ENCODE measurements at regions of chr9 and their contacts with region 1.

Region 1: GRCh38 chr9:19464764-19465585 is 56.2 kb downstream of the ACER2 start:
- DNase-seq: peak; percentile 94
- H3K4me3 ChIP-seq: peak overlapping the region; percentile 46 to 70
- H3K27ac ChIP-seq: no peak overlapping the region
- H3K4me1 ChIP-seq: peaks cover 0 to 5% of the 10 kb centered on the region in 2 experiments; a peak in 1 of 4 replicates
- H3K27me3 ChIP-seq: no peaks in the 10 kb centered on the region
- CTCF ChIP-seq: peak; percentile 89
- EP300 ChIP-seq: no peak
- RAD21 ChIP-seq: peak; percentile 29; the same call in 1 of the 2 replicates

Region 2: DNA sequence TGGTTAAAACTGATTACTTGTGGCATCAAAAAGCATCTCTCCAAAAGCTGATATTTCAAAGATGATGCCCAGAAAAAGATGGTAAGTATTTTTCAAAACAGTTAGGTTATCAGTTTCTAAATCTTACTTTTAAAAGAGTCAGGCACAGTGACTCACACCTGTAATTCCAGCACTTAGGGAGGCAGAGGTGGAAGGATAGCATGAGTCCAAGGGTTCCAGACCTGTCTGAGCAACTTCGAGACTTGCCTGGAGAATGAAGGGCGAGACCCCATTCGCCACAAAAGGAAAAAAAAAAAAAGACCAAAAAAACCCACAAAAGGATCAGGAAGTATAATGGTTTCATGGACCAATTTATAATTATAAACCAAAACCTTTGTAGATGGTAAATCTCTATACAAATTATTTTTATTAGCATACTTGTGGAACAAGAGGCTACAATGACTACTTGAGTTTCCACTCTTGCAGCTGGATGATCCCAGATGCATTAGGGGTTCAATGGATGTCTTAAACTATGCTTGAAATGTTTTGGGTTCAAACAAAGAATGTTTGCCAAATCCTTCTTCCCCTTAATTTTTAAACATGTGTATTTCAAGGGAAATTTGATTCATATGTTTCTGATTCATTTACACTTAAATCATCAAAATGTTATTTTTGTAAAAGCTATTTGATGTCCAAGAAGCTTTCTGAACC is 894.9 kb before region 1 on chr9:
- CTCF ChIA-PET with region 1: no interaction called
- POLR2A ChIA-PET with region 1: no interaction called
- DNase-seq: no peak
- H3K4me3 ChIP-seq: no peak overlapping the region
- H3K27ac ChIP-seq: peak overlapping the region; percentile 58 to 95; a peak in 3 of 4 replicates
- H3K4me1 ChIP-seq: peaks cover 8 to 13% of the 10 kb centered on the region in 2 experiments
- H3K27me3 ChIP-seq: no peaks in the 10 kb centered on the region
- CTCF ChIP-seq: no peak
- EP300 ChIP-seq: no peak
- RAD21 ChIP-seq: no peak

Region 3: DNA sequence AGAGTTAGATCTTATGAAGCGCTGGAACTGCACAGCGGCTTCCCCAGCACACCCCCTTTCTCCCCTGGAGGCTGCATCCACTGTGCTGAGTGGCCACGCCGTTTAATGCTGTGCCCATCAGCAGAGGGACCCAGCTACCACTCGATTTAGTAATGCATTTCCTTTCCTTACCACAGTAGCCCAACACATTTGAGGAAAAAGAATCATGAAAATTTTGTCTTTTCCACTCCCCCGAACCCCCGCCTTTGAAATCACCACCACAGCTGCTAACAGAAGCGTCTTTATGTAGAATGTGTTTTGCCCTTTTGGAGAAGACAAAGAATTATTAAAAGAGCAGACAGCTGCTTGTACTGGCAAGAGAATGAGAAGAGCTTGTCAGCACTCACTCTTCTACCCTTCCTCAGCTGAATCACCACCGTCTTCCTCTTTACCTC is 17.0 kb after region 1 on chr9:
- CTCF ChIA-PET with region 1: interaction called, 37 read pairs
- POLR2A ChIA-PET with region 1: no interaction called
- DNase-seq: no peak
- H3K4me3 ChIP-seq: no peak overlapping the region
- H3K27ac ChIP-seq: no peak overlapping the region
- H3K4me1 ChIP-seq: no peaks in the 10 kb centered on the region
- H3K27me3 ChIP-seq: peaks cover 7% of the 10 kb centered on the region
- CTCF ChIP-seq: no peak
- EP300 ChIP-seq: no peak
- RAD21 ChIP-seq: no peak

Measured in SK-N-SH (cell line).